ENCODE measurements at regions of chr20 and their contacts with region 1.

Region 1: DNA sequence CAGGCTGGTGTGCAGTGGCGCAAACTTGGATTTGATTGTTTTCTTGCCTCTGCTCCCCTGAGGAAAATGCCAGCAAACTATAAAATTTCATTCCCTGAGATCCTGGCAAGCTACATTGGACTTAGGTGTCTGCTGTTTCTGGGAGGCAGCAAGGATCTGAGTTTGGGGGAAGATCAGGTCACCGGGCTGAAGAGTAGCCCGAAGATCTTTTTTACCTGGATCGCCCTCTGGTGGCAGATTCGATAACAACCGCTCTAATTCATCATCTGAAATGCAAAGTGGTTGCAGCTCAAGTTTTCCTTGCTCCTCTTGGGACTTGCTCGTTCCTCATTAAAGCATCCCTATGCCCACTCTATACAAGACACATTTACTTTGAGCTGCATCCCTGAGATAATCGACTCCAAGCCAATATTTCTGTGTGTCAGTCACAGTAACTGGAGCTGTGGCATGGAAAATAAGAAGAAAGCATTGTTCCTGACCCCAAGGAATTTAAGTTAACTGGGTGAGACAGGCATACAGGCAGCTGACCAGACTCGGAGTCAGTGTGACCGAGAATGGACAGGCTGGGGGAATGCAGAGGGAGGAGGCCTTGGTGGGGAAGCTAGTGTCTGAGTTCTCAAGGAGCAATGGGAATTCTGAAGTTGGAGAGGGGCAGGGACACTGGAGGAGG is 131.8 kb upstream of the PROKR2 start:
- DNase-seq: peak; percentile 59
- H3K4me3 ChIP-seq: no peak overlapping the region
- H3K27ac ChIP-seq: no peak overlapping the region
- H3K4me1 ChIP-seq: no peaks in the 10 kb centered on the region
- H3K27me3 ChIP-seq: no peaks in the 10 kb centered on the region
- CTCF ChIP-seq: peak; percentile 66

Region 2: GRCh38 chr20:5126512-5127203 is 321.9 kb before region 1 on chr20 and contains the start of gene CDS2:
- intact Hi-C with region 1: loop called (anchors 10 kb)
- DNase-seq: peak; percentile 100
- H3K4me3 ChIP-seq: peak within 1 kb of the TSS; percentile 80
- H3K27ac ChIP-seq: peak within 1 kb of the TSS; percentile 86
- H3K4me1 ChIP-seq: peaks cover 12% of the 10 kb centered on the region
- H3K27me3 ChIP-seq: no peaks in the 10 kb centered on the region
- CTCF ChIP-seq: peak; percentile 35
- total RNA-seq, gene CDS2: 31.7 to 44.3 TPM

Region 3: GRCh38 chr20:5215672-5216304 is 232.8 kb before region 1 on chr20:
- intact Hi-C with region 1: loop called (anchors 10 kb)
- DNase-seq: no peak
- H3K4me3 ChIP-seq: no peak overlapping the region
- H3K27ac ChIP-seq: no peak overlapping the region
- H3K4me1 ChIP-seq: no peaks in the 10 kb centered on the region
- H3K27me3 ChIP-seq: no peaks in the 10 kb centered on the region
- CTCF ChIP-seq: no peak

Region 4: GRCh38 chr20:5480824-5481600 is 32.4 kb after region 1 on chr20:
- intact Hi-C with region 1: no loop called
- DNase-seq: peak; percentile 63
- H3K4me3 ChIP-seq: no peak overlapping the region
- H3K27ac ChIP-seq: peak overlapping the region; percentile 44
- H3K4me1 ChIP-seq: no peaks in the 10 kb centered on the region
- H3K27me3 ChIP-seq: no peaks in the 10 kb centered on the region
- CTCF ChIP-seq: no peak

Measured in colonic mucosa (tissue), 4 donors.